ENCODE measurements at regions of chr12 and their contacts with region 1.

Region 1: DNA sequence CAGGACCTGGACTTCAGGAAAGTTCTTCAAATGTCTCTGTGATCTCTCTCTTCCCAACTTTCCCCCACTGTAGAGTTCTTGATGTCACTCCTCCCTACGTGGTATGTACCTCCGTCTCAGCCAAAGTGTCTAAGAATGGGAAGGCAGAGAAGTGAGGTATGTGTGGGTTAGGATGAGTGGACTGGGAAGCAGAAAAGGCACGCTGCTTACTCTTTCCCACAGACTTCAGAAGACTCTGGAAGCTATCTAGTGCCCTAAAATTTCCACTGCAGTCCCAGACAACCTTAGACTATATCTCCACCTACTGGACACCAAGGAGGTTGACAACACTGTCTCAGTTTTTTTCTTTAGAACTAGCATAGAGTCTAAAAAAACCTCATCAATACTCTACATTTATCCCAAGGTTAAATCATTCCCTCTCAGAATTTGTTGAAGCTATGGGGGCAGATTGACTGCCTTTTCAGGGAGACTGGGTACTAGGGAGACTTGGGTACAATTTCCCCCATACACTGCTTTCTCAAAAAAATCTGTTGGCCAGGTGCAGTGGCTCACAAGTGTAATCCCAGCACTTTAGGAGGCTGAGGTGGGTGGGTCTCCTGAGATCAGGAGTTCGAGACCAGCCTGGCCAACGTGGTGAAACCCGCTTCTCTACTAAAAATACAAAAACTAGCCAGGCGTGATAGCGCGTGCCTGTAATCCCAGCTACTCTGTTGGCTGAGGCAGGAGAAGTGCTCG is 20.6 kb upstream of the ITGA5 start:
- DNase-seq: no peak
- H3K4me3 ChIP-seq: no peak overlapping the region
- H3K27ac ChIP-seq: no peak overlapping the region
- H3K4me1 ChIP-seq: no peaks in the 10 kb centered on the region
- H3K27me3 ChIP-seq: no peaks in the 10 kb centered on the region
- CTCF ChIP-seq: peak; percentile 54 to 91 (median 87)
- EP300 ChIP-seq: no peak
- POLR2A ChIP-seq: no peak

Region 2: GRCh38 chr12:54240971-54241588 is 198.6 kb before region 1 on chr12:
- intact Hi-C with region 1: no loop called
- DNase-seq: no peak
- H3K4me3 ChIP-seq: no peak overlapping the region
- H3K27ac ChIP-seq: no peak overlapping the region
- H3K4me1 ChIP-seq: no peaks in the 10 kb centered on the region
- H3K27me3 ChIP-seq: no peaks in the 10 kb centered on the region
- CTCF ChIP-seq: no peak
- EP300 ChIP-seq: no peak
- POLR2A ChIP-seq: no peak

Region 3: GRCh38 chr12:54398995-54399793 is 40.5 kb before region 1 on chr12:
- intact Hi-C with region 1: loop called (anchors 1 to 5 kb)
- DNase-seq: peak; percentile 78 to 92 (median 89)
- H3K4me3 ChIP-seq: no peak overlapping the region
- H3K27ac ChIP-seq: no peak overlapping the region
- H3K4me1 ChIP-seq: no peaks in the 10 kb centered on the region
- H3K27me3 ChIP-seq: no peaks in the 10 kb centered on the region
- CTCF ChIP-seq: peak; percentile 90 to 96 (median 95)
- EP300 ChIP-seq: no peak
- POLR2A ChIP-seq: peak; percentile 27

Region 4: DNA sequence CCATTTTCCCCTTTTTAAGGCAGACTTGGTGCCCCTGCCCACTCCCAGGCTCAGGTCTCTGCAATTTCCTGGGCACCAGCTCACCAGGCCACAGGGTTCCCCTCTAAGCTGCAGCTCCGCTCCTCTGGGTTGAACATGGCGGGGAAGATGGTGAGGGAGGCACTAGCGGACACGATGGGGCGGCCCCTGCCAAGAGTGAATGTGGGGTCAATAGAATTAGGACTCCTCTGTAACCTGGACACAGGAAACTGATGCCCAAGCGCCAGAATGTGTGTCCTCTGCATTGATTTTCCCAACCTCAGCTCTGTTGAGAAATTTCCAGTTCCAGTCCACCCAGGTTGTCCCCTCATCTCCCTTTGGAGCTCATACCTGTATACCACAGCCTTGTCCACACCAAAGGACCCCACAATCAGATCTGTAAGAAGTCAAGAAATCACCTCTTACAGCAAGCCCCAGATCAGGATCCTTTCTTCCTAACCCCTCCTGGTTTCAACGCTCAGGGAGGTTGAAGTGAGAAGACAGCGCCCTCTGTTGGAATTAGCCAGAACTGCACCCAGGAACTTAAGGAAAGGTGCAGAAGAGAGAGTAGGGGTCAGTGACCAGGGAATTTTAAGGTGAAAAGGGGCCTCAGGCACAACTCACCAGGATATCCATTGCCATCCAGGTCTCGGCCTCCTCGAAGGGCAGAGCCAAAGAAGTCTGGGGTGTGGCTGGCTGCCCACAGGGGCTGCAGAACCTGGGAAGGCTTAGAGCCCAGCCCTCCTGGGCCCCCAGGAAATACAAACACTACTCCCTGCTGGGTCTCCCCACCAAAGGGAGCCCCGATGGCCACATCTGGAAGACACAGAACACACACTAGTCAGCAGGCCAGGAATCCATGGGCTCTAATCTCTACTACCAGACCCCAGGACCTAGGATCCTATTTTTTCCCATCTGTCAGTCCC is 35.4 kb before region 1 on chr12:
- intact Hi-C with region 1: loop called (anchors 1 to 5 kb)
- DNase-seq: peak in 4 of 5 donors; percentile 55 to 70 (median 60)
- H3K4me3 ChIP-seq: no peak overlapping the region
- H3K27ac ChIP-seq: peak overlapping the region in 1 of 2 donors; percentile 19
- H3K4me1 ChIP-seq: no peaks in the 10 kb centered on the region
- H3K27me3 ChIP-seq: no peaks in the 10 kb centered on the region
- CTCF ChIP-seq: peak; percentile 73 to 77 (median 74)
- EP300 ChIP-seq: no peak
- POLR2A ChIP-seq: no peak